RWPE1 (cell line): ENCODE measurements at regions of chr17 and their contacts with region 1.

Region 1: DNA sequence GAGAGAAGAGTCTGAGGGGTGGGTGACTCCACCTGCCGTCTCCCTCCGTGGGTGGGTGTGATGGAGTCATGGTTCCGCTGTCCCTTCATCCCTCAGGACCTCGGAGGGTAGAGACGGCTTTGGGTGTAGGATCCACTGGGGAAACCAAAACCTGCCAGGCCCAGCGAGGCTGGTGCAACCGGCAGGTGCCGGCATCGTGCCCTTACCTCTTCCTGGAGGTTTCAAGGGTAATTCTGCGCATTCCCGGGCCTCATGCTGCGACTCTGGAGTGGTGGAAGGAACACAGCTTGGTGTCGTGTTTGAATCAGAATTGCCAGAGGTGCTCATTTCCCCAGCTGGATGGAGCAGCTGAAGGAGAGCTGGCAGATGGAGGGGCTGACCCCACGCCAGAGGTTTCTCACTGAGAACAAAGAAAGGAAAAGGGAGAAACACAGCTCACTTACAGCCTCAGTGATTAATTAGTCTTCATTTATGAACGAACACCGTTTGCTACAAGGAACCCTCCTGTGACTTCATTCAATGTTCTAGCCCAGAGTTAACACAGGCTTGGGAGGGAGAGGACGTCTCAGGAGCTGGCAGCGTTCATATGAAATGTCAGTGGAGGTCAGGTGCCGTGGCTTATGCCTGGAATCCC is 16.3 kb upstream of the ATP2A3 start:
- DNase-seq: no peak
- H3K27ac ChIP-seq: no peak overlapping the region
- CTCF ChIP-seq: no peak

Region 2: GRCh38 chr17:3921502-3922319 is 58.8 kb before region 1 on chr17:
- CTCF ChIA-PET with region 1: no interaction called
- POLR2A ChIA-PET with region 1: no interaction called
- DNase-seq: no peak
- H3K27ac ChIP-seq: no peak overlapping the region
- CTCF ChIP-seq: no peak

Region 3: GRCh38 chr17:3943240-3943891 is 37.1 kb before region 1 on chr17:
- CTCF ChIA-PET with region 1: interaction called, 10 read pairs
- POLR2A ChIA-PET with region 1: no interaction called
- DNase-seq: no peak
- H3K27ac ChIP-seq: no peak overlapping the region
- CTCF ChIP-seq: no peak

Region 4: DNA sequence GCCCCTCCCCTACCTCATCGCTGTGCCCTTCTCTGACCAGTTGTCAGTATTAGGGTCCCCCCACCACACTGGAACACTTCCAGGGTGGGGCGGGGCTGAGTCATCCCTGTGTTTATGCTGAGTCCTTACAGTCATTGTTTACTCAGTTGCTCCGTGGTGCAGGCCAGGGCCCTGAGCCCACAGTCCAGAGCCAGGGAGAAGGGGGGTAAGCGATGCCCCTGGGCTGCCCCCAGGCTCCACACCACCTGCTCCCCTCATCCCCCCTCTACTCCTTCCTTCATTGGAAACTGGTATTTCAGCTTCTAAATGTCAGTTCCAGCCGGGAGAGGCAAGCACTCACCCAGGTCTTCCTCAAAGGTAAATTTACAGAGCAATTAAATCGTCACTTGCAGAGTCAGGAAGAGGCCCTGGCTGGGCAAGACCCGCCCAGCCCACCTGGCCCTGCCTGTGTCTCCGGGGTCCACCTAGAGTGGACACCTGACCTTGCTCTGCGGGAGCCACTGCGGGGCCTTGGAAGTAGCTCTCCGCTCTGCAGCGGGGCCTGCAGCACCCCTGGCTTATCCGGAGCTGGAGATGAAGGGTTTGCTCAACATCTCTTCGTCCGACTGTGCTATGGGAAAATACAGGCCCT is 21.1 kb before region 1 on chr17:
- CTCF ChIA-PET with region 1: no interaction called
- POLR2A ChIA-PET with region 1: no interaction called
- DNase-seq: peak; percentile 51
- H3K27ac ChIP-seq: no peak overlapping the region
- CTCF ChIP-seq: no peak